Caco-2 (cell line): ENCODE measurements at regions of chr15 and their contacts with region 1.

Region 1: DNA sequence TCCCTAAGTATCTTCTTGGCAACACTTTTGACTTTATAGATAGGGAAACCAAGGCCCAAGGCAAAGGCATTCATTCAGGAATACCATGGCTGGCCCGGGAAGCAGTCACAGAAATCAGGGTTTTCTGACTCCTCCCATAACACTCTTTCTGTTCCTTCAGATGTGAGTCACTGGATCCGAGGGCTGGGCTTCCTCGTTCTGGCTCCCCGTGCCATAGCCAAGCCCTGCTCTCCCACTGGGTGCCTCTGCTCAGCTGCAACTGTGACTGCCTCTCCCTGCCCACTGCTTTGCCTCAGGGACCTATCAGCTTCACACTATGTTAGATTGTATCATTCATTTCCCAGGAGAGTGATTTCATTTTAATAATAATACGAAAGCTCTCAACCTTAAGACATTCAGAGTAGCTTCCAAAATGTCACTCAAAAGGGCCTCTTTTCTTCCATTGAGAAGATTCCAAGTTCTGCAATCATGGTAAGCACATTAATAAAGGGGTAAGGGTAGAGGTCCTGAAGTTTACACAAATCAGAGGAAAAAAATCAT is 50.2 kb downstream of the GABRB3 start:
- DNase-seq: no peak
- H3K4me3 ChIP-seq: no peak overlapping the region
- H3K4me3 Mint-ChIP-seq: no peak overlapping the region
- H3K27ac Mint-ChIP-seq: no peak overlapping the region
- H3K4me1 ChIP-seq: no peaks in the 10 kb centered on the region
- H3K4me1 Mint-ChIP-seq: no peaks in the 10 kb centered on the region
- H3K27me3 ChIP-seq: no peaks in the 10 kb centered on the region
- H3K27me3 Mint-ChIP-seq: peaks cover 5% of the 10 kb centered on the region
- CTCF ChIP-seq: no peak

Region 2: DNA sequence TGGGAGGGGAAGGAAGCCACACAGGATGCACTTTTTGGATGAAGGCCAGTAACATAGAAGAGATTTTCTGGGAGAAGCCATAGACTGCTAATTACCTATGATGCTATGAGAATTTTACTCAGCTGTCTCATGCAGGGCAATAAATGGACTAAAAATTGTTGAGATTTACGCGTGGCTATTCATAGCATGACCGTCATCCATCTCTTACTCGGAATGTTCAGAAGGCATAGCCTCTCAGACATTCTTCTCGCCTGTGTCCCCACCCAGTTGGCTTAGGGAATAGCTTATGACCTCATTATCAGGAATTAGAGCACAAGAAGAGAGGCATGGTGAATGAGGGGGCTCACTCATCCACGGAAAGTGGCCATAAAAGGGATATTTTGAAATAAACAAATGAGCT is 751.6 kb before region 1 on chr15:
- CTCF ChIA-PET with region 1: no interaction called
- POLR2A ChIA-PET with region 1: no interaction called
- intact Hi-C with region 1: no loop called
- DNase-seq: no peak
- H3K4me3 ChIP-seq: no peak overlapping the region
- H3K4me3 Mint-ChIP-seq: no peak overlapping the region
- H3K27ac Mint-ChIP-seq: no peak overlapping the region
- H3K4me1 ChIP-seq: no peaks in the 10 kb centered on the region
- H3K4me1 Mint-ChIP-seq: no peaks in the 10 kb centered on the region
- H3K27me3 ChIP-seq: no peaks in the 10 kb centered on the region
- H3K27me3 Mint-ChIP-seq: peaks cover 10% of the 10 kb centered on the region
- CTCF ChIP-seq: no peak

Region 3: GRCh38 chr15:26773069-26773877 is 50.6 kb after region 1 on chr15:
- CTCF ChIA-PET with region 1: no interaction called
- POLR2A ChIA-PET with region 1: no interaction called
- intact Hi-C with region 1: loop called (anchors 10 kb)
- DNase-seq: no peak
- H3K4me3 ChIP-seq: no peak overlapping the region
- H3K4me3 Mint-ChIP-seq: no peak overlapping the region
- H3K27ac Mint-ChIP-seq: no peak overlapping the region
- H3K4me1 ChIP-seq: no peaks in the 10 kb centered on the region
- H3K4me1 Mint-ChIP-seq: no peaks in the 10 kb centered on the region
- H3K27me3 ChIP-seq: no peaks in the 10 kb centered on the region
- H3K27me3 Mint-ChIP-seq: no peaks in the 10 kb centered on the region
- CTCF ChIP-seq: no peak